ENCODE measurements at regions of chr7 and their contacts with region 1.

Region 1: GRCh38 chr7:150753826-150754603 is 16.8 kb downstream of the GIMAP5 start:
- DNase-seq: peak; percentile 60
- ATAC-seq: peak; percentile 60
- H3K4me3 Mint-ChIP-seq: no peak overlapping the region
- H3K27ac Mint-ChIP-seq: peak overlapping the region; percentile 95
- H3K4me1 Mint-ChIP-seq: peaks cover 77% of the 10 kb centered on the region
- H3K27me3 Mint-ChIP-seq: no peaks in the 10 kb centered on the region
- CTCF ChIP-seq: no peak

Region 2: DNA sequence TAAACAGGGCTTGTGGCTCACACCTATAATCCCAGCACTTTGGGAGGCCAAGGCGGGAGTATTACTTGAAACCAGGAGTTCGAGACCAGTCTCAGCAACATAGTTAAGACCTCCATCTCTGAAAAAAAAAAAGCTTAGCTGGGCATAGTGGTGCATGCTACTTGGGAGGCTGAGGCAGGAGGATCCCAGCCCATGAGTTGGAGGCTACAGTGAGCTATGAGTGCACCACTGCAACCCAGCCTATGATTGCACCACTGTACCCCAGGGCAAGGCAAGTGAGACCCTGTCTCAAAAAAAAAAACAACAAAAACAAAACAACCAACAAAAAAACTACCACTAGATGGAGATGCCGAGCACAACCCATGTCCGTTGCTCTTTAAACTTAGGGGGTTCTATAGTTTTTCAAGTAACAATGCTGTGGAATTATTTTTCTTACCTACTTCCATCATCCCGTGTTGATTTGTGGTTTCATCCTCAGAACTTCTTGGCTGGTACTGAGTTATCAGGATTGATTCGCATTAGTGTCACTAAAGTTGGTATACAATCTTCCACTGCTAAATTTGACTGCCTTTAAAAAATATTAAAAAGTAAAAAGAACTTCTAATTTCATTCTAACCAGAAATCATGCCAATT is 397.6 kb before region 1 on chr7:
- CTCF ChIA-PET with region 1: interaction called, 5 read pairs
- POLR2A ChIA-PET with region 1: no interaction called
- intact Hi-C with region 1: loop called (anchors 10 kb)
- DNase-seq: peak; percentile 38
- ATAC-seq: peak; percentile 17
- H3K4me3 Mint-ChIP-seq: peak overlapping the region; percentile 2
- H3K27ac Mint-ChIP-seq: no peak overlapping the region
- H3K4me1 Mint-ChIP-seq: peaks cover 38% of the 10 kb centered on the region
- H3K27me3 Mint-ChIP-seq: no peaks in the 10 kb centered on the region
- CTCF ChIP-seq: peak; percentile 89

Region 3: GRCh38 chr7:150514748-150515222 is 239.2 kb before region 1 on chr7 and contains the start of gene GIMAP7:
- CTCF ChIA-PET with region 1: interaction called, 3 read pairs
- POLR2A ChIA-PET with region 1: interaction called, 8 read pairs
- intact Hi-C with region 1: loop called (anchors 2 kb)
- DNase-seq: peak; percentile 72
- ATAC-seq: peak; percentile 80
- H3K4me3 Mint-ChIP-seq: peak within 1 kb of the TSS; percentile 98
- H3K27ac Mint-ChIP-seq: peak within 1 kb of the TSS; percentile 99
- H3K4me1 Mint-ChIP-seq: peaks cover 46% of the 10 kb centered on the region
- H3K27me3 Mint-ChIP-seq: no peaks in the 10 kb centered on the region
- CTCF ChIP-seq: no peak
- total RNA-seq, gene GIMAP7: 29.0 to 29.5 TPM

Region 4: DNA sequence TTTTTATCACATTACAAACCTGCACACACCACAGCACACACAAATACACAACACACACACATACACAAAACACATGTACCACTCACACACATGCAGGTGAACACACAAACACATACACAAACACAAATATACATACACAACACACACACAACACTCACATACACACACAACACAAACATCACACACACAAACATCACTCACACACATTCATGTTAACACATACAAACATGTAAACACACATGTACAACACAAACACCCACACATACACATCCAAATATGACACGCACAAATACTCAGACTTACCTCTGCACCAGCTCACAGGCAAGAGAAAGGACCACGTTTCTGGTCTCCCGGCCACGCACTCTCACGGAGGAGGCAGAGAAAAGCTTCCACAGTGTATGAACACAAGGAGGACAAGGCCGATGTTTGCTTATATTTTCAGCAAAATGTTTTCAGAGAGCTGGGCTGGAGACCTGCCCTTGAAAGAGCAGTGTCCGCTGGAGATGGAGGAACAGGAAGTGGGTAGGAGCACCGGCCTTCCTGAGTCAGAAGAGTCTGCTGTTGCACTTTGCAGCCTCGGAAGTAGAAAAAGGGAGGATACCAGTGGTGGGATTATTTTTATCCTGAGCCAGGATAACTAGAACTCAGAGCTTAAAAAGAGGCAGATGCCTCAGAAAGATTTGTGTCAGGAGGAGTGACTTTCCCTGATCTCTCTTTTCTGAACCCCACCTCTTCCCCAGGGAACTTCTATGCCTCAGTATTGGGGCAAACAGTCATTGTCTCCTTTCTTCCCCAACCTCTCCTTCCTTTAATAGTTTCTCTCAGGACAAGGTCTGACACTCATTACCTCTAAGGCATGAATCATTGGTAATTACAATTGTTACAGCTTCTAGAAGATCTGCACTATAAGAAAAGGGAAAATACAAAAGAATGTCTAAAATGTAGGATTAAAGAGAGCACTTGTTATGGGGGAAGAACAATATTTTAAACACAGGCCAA is 121.8 kb before region 1 on chr7 and contains the start of gene GIMAP6:
- CTCF ChIA-PET with region 1: interaction called, 10 read pairs
- POLR2A ChIA-PET with region 1: interaction called, 4 read pairs
- intact Hi-C with region 1: loop called (anchors 5 kb)
- DNase-seq: peak; percentile 61
- ATAC-seq: peak; percentile 71
- H3K4me3 Mint-ChIP-seq: peak within 1 kb of the TSS; percentile 99
- H3K27ac Mint-ChIP-seq: peak within 1 kb of the TSS; percentile 99
- H3K4me1 Mint-ChIP-seq: peaks cover 69% of the 10 kb centered on the region
- H3K27me3 Mint-ChIP-seq: no peaks in the 10 kb centered on the region
- CTCF ChIP-seq: no peak
- total RNA-seq, gene GIMAP6: 21.2 to 21.5 TPM

Region 5: DNA sequence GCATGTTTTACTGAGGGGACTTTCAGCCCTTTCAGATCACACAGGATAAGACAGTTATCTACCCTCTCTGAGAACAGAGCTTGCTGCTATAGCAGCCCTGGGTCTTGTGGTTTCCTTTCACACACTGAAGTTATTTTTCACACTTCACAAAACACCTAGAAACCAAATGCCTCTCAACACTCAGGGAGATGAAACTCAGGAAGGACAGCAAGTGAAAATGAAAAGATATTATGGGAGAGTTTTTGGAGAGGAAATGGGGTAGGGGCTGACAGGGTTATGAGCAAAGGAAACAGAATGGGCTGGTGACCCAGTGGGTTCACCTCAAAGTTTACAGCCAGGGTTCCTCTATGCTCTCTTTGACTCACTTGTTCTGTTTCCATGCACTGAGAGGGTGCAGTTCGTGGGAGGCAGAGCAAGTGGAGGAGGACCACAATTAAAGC is 85.5 kb before region 1 on chr7:
- CTCF ChIA-PET with region 1: interaction called, 4 read pairs
- POLR2A ChIA-PET with region 1: interaction called, 4 read pairs
- intact Hi-C with region 1: loop called (anchors 1 kb)
- DNase-seq: peak; percentile 85
- ATAC-seq: peak; percentile 73
- H3K4me3 Mint-ChIP-seq: peak overlapping the region; percentile 54
- H3K27ac Mint-ChIP-seq: peak overlapping the region; percentile 97
- H3K4me1 Mint-ChIP-seq: peaks cover 86% of the 10 kb centered on the region
- H3K27me3 Mint-ChIP-seq: no peaks in the 10 kb centered on the region
- CTCF ChIP-seq: no peak

Region 6: GRCh38 chr7:150927956-150928344 is 173.9 kb after region 1 on chr7:
- CTCF ChIA-PET with region 1: no interaction called
- POLR2A ChIA-PET with region 1: no interaction called
- intact Hi-C with region 1: no loop called
- DNase-seq: peak; percentile 39
- ATAC-seq: peak; percentile 53
- H3K4me3 Mint-ChIP-seq: no peak overlapping the region
- H3K27ac Mint-ChIP-seq: no peak overlapping the region
- H3K4me1 Mint-ChIP-seq: peaks cover 20% of the 10 kb centered on the region
- H3K27me3 Mint-ChIP-seq: peaks cover 9% of the 10 kb centered on the region
- CTCF ChIP-seq: no peak